ENCODE measurements at regions of chr1 and their contacts with region 1.

Region 1: DNA sequence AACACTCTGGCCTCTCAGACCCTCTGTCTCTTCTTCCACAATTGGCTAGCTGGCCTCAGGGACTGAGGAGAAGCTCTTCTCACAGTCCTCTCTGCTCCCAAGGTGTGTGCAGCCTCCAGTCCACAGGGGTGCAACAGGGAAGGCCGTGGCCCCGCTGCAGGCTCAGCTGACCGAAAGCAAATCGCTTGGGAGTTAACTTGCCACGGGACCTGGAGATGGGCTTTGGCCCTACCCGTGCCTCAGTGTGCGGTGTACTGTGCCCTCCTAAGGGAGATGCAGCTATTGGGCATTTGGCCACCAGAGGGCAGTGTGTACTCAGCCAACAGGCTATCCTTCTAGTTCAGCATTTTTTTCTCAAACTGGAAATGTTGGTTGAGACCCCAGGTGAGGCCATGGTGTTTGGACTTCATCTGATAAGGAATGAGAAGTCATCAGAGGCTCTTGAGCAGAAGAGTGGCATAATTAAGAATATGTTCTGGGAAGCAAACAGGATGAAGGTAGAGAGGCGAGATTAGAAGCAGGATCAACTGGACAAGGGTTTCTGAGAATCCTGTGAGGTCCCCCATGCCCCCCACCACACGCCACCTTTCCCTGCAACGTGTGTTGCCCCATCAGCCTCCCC is 42.5 kb upstream of the TMEM125 start:
- DNase-seq: peak; percentile 78
- H3K4me3 ChIP-seq: no peak overlapping the region
- H3K27ac ChIP-seq: no peak overlapping the region
- H3K4me1 ChIP-seq: peaks cover 7% of the 10 kb centered on the region
- H3K27me3 ChIP-seq: no peaks in the 10 kb centered on the region
- CTCF ChIP-seq: peak; percentile 84 to 97
- POLR2A ChIP-seq: no peak

Region 2: DNA sequence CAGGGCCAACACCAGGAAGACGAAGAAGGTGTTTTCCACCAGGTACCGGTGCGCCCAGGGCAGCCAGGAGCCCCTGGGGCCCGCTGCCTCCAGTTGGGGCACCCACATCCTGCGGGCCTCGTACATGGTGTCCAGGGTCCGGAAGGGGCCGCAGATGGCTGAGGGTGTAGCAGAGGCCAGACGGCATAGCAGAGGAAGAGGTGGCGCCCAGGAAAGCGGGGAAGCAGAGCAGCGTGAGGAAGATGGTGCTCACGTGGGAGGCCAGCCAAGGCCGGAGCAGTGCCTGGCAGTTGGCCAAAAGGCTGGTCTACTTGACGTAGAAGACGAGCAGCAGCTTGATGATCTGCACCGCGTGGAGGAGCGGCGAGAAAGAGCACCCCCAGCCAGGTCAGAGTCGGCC is 340.5 kb before region 1 on chr1:
- CTCF ChIA-PET with region 1: no interaction called
- POLR2A ChIA-PET with region 1: no interaction called
- dilution Hi-C with region 1: no loop called
- intact Hi-C with region 1: no loop called
- DNase-seq: no peak
- H3K4me3 ChIP-seq: no peak overlapping the region
- H3K27ac ChIP-seq: no peak overlapping the region
- H3K4me1 ChIP-seq: no peaks in the 10 kb centered on the region
- H3K27me3 ChIP-seq: peaks cover 0 to 2% of the 10 kb centered on the region in 2 experiments
- CTCF ChIP-seq: no peak
- POLR2A ChIP-seq: no peak

Region 3: GRCh38 chr1:43206600-43207228 is 20.5 kb before region 1 on chr1:
- CTCF ChIA-PET with region 1: interaction called, 42 read pairs
- POLR2A ChIA-PET with region 1: interaction called, 4 read pairs
- dilution Hi-C with region 1: no loop called
- intact Hi-C with region 1: loop called (anchors 1 kb)
- DNase-seq: no peak
- H3K4me3 ChIP-seq: peak overlapping the region in 1 of 3 experiments; percentile 7
- H3K27ac ChIP-seq: peak overlapping the region; percentile 97
- H3K4me1 ChIP-seq: peaks cover 27% of the 10 kb centered on the region
- H3K27me3 ChIP-seq: no peaks in the 10 kb centered on the region
- CTCF ChIP-seq: no peak
- POLR2A ChIP-seq: peak; percentile 92

Region 4: DNA sequence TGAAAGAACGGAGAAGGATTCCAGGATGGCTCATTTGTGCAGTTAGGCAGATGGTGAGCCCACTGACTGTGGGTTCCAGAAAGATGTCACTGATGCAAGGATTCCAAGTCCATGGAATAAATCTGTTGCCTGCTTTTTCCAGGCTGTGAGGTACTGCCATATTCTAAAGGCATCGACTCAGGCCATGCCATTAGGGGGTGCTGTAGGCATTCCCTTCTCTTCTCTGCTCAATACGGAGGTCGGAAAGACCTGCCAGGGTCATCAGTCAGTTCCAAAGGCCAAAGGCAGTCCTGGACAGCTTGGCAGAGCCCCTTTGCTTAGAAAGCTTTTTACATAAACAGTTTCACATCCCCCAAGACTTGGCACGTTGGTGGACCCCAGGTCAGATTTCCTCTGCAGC is 10.8 kb after region 1 on chr1:
- CTCF ChIA-PET with region 1: interaction called, 19 read pairs
- POLR2A ChIA-PET with region 1: no interaction called
- dilution Hi-C with region 1: no loop called
- intact Hi-C with region 1: no loop called
- DNase-seq: peak; percentile 77
- H3K4me3 ChIP-seq: no peak overlapping the region
- H3K27ac ChIP-seq: no peak overlapping the region
- H3K4me1 ChIP-seq: peaks cover 6% of the 10 kb centered on the region
- H3K27me3 ChIP-seq: no peaks in the 10 kb centered on the region
- CTCF ChIP-seq: peak; percentile 81 to 86
- POLR2A ChIP-seq: no peak

Region 5: DNA sequence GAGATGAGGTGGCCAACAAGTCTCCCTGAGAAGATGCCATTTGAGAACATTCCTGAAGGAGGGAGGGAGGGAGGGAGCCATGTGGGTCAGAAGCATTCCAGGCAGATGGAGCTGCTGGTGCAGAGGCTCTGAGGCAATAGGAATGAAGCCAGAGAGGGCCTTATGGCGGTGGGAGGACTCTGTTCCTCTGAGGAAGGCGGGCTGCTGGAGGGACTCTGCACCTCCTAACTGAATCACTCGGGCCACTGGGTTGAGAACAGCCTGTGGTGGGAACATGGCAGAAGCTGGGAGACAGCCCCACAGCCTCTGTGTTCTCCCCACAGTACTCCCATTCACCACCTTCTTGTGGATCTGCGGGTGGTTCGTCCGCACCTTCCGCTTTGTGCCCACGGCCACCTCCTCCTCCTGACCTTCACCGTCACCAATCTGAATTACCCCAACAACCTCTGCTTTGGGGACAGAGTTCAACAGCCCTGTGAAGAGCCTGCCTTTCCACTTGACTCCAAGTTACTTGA is 40.1 kb after region 1 on chr1:
- CTCF ChIA-PET with region 1: no interaction called
- POLR2A ChIA-PET with region 1: no interaction called
- dilution Hi-C with region 1: no loop called
- intact Hi-C with region 1: no loop called
- DNase-seq: no peak
- H3K4me3 ChIP-seq: no peak overlapping the region
- H3K27ac ChIP-seq: no peak overlapping the region
- H3K4me1 ChIP-seq: no peaks in the 10 kb centered on the region
- H3K27me3 ChIP-seq: peaks cover 0 to 2% of the 10 kb centered on the region in 2 experiments
- CTCF ChIP-seq: no peak
- POLR2A ChIP-seq: no peak

Region 6: GRCh38 chr1:43358746-43359693 is 131.8 kb after region 1 on chr1 and contains the start of gene CDC20:
- CTCF ChIA-PET with region 1: interaction called, 18 read pairs
- POLR2A ChIA-PET with region 1: no interaction called
- dilution Hi-C with region 1: no loop called
- intact Hi-C with region 1: no loop called
- DNase-seq: peak; percentile 98
- H3K4me3 ChIP-seq: peak within 1 kb of the TSS; percentile 57 to 84 (median 80)
- H3K27ac ChIP-seq: peak within 1 kb of the TSS; percentile 80
- H3K4me1 ChIP-seq: peaks cover 38% of the 10 kb centered on the region
- H3K27me3 ChIP-seq: no peaks in the 10 kb centered on the region
- CTCF ChIP-seq: no peak
- POLR2A ChIP-seq: no peak
- total RNA-seq, gene CDC20: 156 and 170 TPM in 2 replicates

Region 7: DNA sequence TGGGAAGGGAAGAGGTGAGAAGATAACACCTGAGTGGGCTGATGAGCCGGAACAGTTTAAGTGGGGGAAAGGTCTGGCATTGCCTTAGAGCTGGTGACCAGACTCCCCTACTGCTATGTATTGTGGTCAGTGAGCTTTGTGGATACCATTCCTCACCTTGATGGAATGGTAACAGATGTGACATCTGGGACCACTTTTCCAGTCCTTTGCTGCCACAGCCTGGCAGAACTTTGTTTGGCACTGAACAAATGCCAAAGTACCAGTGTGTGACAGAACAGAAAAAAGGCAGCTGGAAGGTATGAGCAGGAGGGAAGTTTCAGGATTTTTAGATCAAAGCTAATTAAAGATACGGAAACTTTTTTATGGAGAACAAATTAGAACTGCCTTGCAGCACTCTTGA is 156.2 kb after region 1 on chr1:
- CTCF ChIA-PET with region 1: interaction called, 34 read pairs
- POLR2A ChIA-PET with region 1: no interaction called
- dilution Hi-C with region 1: no loop called
- intact Hi-C with region 1: no loop called
- DNase-seq: no peak
- H3K4me3 ChIP-seq: no peak overlapping the region
- H3K27ac ChIP-seq: no peak overlapping the region
- H3K4me1 ChIP-seq: peaks cover 7% of the 10 kb centered on the region
- H3K27me3 ChIP-seq: no peaks in the 10 kb centered on the region
- CTCF ChIP-seq: peak in 1 of 2 donors; percentile 6
- POLR2A ChIP-seq: no peak

Region 8: DNA sequence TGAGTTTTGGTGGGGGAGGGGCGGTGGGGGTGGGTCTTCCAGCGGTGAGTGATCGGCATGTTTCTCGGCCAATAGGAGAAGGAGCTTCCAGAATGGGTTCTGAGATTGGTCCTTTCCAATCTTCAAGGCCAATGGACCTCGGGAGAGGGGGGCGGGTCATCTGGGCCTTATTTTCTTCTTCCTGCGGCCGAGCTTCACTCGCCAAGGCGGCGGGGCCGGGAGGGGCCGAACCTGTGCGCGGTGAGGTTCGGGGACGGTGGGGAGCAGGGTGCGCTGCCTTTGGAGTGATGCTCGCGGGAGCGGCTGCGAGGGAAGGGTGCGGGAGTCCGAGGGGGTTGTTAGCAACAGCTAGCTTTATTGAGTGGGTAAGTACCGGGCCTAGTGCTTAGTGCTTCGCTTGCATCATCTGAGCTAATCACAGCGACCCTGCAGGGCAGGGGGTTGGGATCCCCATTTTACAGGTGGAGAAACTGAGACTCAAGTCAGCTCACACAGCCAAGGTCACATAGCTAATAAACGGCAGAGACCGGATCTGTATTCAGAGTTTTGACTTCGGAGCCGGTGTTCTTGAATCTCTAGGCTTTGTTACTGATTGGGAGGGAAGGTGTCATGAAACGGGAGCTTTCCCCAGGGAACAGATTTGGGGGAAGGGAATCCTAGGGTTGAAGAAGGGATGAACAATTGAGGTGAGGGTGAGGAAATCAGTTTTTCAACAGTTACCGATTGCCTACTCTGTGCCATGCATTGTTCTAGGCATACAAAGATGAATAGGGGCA is 423.2 kb after region 1 on chr1:
- CTCF ChIA-PET with region 1: interaction called, 3 read pairs
- POLR2A ChIA-PET with region 1: no interaction called
- dilution Hi-C with region 1: no loop called
- intact Hi-C with region 1: loop called (anchors 2 kb)
- DNase-seq: peak; percentile 94
- H3K4me3 ChIP-seq: peak overlapping the region; percentile 60 to 95 (median 65)
- H3K27ac ChIP-seq: peak overlapping the region; percentile 63
- H3K4me1 ChIP-seq: peaks cover 16% of the 10 kb centered on the region
- H3K27me3 ChIP-seq: peaks cover under 1 to 1% of the 10 kb centered on the region in 2 experiments
- CTCF ChIP-seq: no peak
- POLR2A ChIP-seq: peak; percentile 99